ENCODE measurements at regions of chr1 and their contacts with region 1.

Region 1: DNA sequence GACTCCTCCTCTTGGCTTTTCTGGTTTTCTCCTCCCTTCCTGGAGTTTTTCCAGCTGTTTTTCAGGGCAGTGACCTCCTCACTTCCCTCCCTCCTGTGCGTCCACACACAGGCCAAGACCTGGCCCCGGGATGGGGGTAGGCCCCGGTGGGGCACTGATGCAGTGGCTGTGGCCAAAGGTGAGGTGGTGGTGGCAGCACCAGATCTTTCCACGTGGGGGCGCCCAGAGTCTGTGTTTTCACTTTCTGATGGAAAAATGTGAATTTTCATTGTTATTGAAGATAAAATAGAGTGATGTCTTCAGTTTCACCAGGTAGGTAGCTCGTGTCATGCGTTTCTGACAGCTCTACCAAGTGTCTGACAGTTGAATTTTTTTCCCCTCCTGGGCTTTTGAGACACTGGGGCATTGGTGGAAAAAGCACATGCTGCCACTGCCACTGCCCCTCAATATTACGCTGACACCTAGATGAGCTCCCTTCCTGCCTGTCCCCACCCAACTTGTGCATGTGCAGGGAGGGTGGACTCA is 39.9 kb upstream of the MAGOH start:
- DNase-seq: peak; percentile 89
- H3K4me3 ChIP-seq: no peak overlapping the region; a peak in 1 of 4 replicates
- H3K27ac ChIP-seq: no peak overlapping the region
- H3K4me1 ChIP-seq: peaks cover 0 to 10% of the 10 kb centered on the region in 2 experiments; a peak in 1 of 4 replicates
- H3K27me3 ChIP-seq: no peaks in the 10 kb centered on the region
- CTCF ChIP-seq: peak; percentile 93
- EP300 ChIP-seq: no peak
- RAD21 ChIP-seq: peak; percentile 95

Region 2: GRCh38 chr1:53047737-53048732 is 230.2 kb before region 1 on chr1:
- CTCF ChIA-PET with region 1: no interaction called
- POLR2A ChIA-PET with region 1: no interaction called
- DNase-seq: no peak
- H3K4me3 ChIP-seq: 0 out of 4 replicates have a peak overlapping the region, but pooled peaks of 1 of the 2 experiments have one; percentile 4
- H3K27ac ChIP-seq: peak overlapping the region; percentile 73 to 80
- H3K4me1 ChIP-seq: peaks cover 28 to 54% of the 10 kb centered on the region in 2 experiments
- H3K27me3 ChIP-seq: no peaks in the 10 kb centered on the region
- CTCF ChIP-seq: no peak
- EP300 ChIP-seq: peak in 1 of 2 experiments; percentile 59; a peak in 1 of 4 replicates
- RAD21 ChIP-seq: no peak

Region 3: GRCh38 chr1:53255031-53255430 is 23.2 kb before region 1 on chr1:
- CTCF ChIA-PET with region 1: interaction called, 25 read pairs
- POLR2A ChIA-PET with region 1: no interaction called
- DNase-seq: no peak
- H3K4me3 ChIP-seq: no peak overlapping the region
- H3K27ac ChIP-seq: no peak overlapping the region
- H3K4me1 ChIP-seq: peaks cover 0 to 11% of the 10 kb centered on the region in 2 experiments; a peak in 1 of 4 replicates
- H3K27me3 ChIP-seq: no peaks in the 10 kb centered on the region
- CTCF ChIP-seq: peak; percentile 13; the same call in 1 of the 2 replicates
- EP300 ChIP-seq: no peak
- RAD21 ChIP-seq: no peak

Region 4: DNA sequence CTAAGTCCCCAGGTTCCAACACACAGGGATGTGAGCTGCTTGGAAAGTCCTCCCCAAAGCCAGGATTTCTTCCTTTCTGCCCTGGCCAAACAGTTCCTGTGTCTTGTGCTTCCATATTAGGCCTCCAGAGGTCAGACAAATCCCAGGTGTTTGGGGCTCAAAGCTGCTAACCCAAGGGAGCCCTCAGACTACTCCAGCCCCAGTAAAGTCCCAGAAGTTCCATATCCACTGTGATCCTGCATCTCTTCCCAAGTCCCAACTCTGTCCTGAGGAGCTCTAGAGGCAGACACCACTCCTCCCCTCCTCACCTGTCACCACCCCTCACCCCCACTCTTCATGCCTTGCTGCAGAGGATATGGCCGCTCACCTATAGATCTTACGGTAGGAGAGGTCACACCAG is 12.2 kb before region 1 on chr1:
- CTCF ChIA-PET with region 1: interaction called, 35 read pairs
- POLR2A ChIA-PET with region 1: no interaction called
- DNase-seq: no peak
- H3K4me3 ChIP-seq: no peak overlapping the region
- H3K27ac ChIP-seq: no peak overlapping the region
- H3K4me1 ChIP-seq: no peaks in the 10 kb centered on the region
- H3K27me3 ChIP-seq: no peaks in the 10 kb centered on the region
- CTCF ChIP-seq: peak; percentile 37
- EP300 ChIP-seq: no peak
- RAD21 ChIP-seq: peak; percentile 50

Region 5: GRCh38 chr1:53315456-53316423 is 37.5 kb after region 1 on chr1:
- CTCF ChIA-PET with region 1: interaction called, 21 read pairs
- POLR2A ChIA-PET with region 1: interaction called, 13 read pairs
- DNase-seq: peak; percentile 86
- H3K4me3 ChIP-seq: no peak overlapping the region
- H3K27ac ChIP-seq: peak overlapping the region; percentile 28 to 100; a peak in 3 of 4 replicates
- H3K4me1 ChIP-seq: peaks cover 0 to 92% of the 10 kb centered on the region in 2 experiments; a peak in 2 of 4 replicates
- H3K27me3 ChIP-seq: no peaks in the 10 kb centered on the region
- CTCF ChIP-seq: no peak
- EP300 ChIP-seq: peak in 1 of 2 experiments; percentile 52; a peak in 1 of 4 replicates
- RAD21 ChIP-seq: peak; percentile 29

Region 6: DNA sequence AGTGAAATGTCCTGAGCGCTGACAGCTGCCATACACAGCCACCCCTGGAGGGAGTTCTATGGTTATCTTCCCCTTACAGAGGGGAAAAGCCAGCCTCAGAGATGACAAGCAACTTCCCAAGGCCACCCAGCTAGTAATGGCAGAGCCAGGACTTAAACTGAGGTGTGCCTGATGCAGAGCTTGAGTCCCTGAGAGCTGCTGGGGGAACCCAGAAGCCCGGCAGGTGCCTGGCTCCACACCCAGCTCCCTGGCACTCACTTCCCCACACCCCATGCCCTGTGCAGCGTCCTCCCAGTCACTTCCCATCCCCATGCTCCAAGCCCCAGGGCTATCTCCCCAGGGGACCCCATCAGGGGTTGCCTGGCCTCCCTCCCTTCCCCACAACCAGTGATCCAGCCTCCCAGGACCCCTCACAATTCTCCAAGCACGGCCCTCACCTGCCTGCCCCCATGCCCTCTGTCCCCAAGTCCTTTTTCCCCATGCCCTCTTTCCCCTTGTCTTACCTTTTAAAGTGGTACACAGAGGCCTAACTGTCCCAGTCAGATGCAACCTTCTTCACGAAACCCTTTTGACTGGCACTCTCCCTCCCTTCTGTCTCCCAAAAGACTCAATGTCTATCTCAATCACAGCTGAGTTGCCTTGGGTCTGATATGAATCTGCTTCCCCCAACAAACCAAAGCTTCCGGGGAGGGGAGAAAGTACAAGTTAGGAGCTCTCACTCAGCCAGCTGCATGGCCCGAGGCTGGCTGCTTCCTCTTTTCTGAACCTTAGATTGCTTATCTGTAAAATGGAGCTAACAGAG is 89.4 kb after region 1 on chr1:
- CTCF ChIA-PET with region 1: interaction called, 11 read pairs
- POLR2A ChIA-PET with region 1: no interaction called
- DNase-seq: peak; percentile 58
- H3K4me3 ChIP-seq: no peak overlapping the region
- H3K27ac ChIP-seq: peak overlapping the region in 1 of 2 experiments; percentile 51; a peak in 1 of 4 replicates
- H3K4me1 ChIP-seq: peaks cover 0 to 37% of the 10 kb centered on the region in 2 experiments; a peak in 1 of 4 replicates
- H3K27me3 ChIP-seq: no peaks in the 10 kb centered on the region
- CTCF ChIP-seq: no peak
- EP300 ChIP-seq: peak in 1 of 2 experiments; percentile 60; a peak in 1 of 4 replicates
- RAD21 ChIP-seq: 0 out of 2 replicates have a peak, but pooled peaks have one; percentile 1

Region 7: DNA sequence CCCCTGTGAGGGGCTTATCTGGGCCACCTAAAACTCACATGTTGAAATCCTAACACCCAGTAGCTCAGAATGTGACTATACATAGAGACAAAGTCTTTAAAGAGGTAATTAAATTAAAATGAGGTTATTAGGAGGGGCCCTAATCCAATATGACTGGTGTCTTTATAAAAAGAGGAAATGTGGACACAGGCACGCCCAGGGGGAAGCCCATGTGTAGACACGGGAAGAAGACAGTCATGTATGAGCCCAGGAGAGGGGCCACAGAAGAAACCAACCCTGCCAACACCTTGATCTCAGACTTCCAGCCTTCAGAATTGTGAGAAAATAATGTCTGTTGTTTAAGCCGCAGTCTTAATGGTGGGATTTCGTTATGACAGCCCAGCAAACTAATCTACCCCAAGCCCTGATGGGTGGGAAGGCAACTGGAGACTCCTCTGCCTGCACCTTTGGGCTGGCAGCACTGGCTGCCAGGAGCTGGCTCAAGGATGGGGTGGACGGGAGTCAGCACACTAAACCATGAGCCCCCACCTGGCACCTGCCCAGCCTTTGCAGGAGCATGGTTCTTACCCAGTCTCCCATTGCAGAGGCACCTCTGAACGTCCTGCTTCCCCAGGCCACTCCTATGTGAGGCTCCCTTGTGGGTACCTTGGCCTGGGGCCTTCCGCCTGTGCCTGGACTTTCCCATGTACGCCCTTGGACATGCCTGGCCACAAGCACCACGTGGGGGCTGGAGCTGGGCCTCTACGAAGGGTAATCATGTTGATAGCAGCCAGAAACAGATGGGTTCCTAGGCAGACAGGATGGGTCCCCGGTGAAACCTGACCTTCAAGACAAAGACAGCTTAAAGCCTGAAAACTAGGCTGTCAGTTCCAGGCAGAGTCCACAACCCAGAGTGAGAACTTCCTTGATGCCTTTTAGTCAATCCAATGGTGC is 123.8 kb after region 1 on chr1:
- CTCF ChIA-PET with region 1: interaction called, 410 read pairs
- POLR2A ChIA-PET with region 1: no interaction called
- DNase-seq: no peak
- H3K4me3 ChIP-seq: no peak overlapping the region
- H3K27ac ChIP-seq: no peak overlapping the region
- H3K4me1 ChIP-seq: peaks cover 0 to under 1% of the 10 kb centered on the region in 2 experiments; a peak in 1 of 4 replicates
- H3K27me3 ChIP-seq: no peaks in the 10 kb centered on the region; the same call in 1 of the 2 replicates
- CTCF ChIP-seq: no peak
- EP300 ChIP-seq: no peak
- RAD21 ChIP-seq: no peak

Region 8: GRCh38 chr1:53450225-53450624 is 172.0 kb after region 1 on chr1:
- CTCF ChIA-PET with region 1: interaction called, 10 read pairs
- POLR2A ChIA-PET with region 1: no interaction called
- DNase-seq: peak; percentile 62
- H3K4me3 ChIP-seq: no peak overlapping the region
- H3K27ac ChIP-seq: no peak overlapping the region
- H3K4me1 ChIP-seq: peaks cover 0 to 11% of the 10 kb centered on the region in 2 experiments; a peak in 1 of 4 replicates
- H3K27me3 ChIP-seq: no peaks in the 10 kb centered on the region
- CTCF ChIP-seq: peak; percentile 55
- EP300 ChIP-seq: no peak
- RAD21 ChIP-seq: peak; percentile 63